Astrocyte of the cerebellum (primary cell): ENCODE measurements at regions of chr14 and their contacts with region 1.

Region 1: GRCh38 chr14:60648934-60649874 is at the start of gene SIX1:
- DNase-seq: peak; percentile 72
- H3K4me3 ChIP-seq: peak within 1 kb of the TSS; percentile 62
- CTCF ChIP-seq: no peak

Region 2: DNA sequence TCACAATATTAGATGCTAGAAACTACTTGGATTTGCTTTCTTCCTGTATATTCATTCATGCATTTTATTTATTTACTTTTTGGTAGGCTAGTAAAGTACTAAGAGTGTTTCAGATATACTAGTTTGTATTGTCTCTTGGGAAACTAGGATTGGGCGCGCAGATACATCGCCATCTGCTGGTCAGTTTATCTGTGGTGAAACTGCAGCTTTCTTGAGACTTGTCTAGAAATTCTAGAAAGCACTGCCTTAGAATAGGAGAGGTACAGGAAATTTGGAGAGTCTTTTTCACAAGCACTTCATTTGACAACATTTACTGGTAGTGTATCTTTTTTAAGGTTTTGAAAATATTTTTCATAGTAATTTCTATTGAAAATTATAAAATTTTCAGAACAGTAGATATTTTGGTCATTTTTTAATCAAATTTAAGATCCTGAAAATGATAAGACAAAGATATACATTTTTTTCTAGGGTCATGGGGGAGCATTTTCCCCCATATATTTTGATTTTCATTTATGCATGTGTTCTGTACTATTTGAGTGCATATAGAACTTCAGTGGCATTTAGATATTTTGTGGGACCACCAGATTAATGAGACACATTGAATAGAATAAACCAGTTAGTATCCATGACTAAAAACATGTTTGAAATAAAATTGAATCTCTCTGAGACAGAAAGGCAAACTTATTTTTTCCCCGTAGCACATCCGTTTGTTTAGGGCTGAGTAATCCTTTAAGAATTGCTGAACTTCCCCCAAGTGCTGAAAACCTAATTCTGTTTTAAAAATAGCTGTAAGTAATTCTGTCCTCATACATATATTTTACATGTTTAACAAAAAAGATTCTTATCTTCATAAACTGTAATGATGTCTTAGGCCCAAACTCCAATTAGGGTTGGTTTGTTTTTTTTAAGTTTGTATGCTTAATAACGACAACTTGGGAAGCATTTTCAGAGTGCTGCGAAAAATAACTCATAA is 376.3 kb after region 1 on chr14:
- in situ Hi-C with region 1: loop called (anchors 10 kb)
- DNase-seq: peak; percentile 69
- H3K4me3 ChIP-seq: no peak overlapping the region
- CTCF ChIP-seq: peak; percentile 88